ENCODE measurements at regions of chr3 and their contacts with region 1.

Region 1: GRCh38 chr3:52278510-52279069 is at the start of gene WDR82:
- DNase-seq: peak; percentile 92 to 100 (median 96)
- ATAC-seq: peak; percentile 93
- H3K4me3 ChIP-seq: peak within 1 kb of the TSS; percentile 92
- H3K4me3 Mint-ChIP-seq: peak within 1 kb of the TSS; percentile 91 to 99 (median 98)
- H3K27ac ChIP-seq: peak within 1 kb of the TSS; percentile 96
- H3K27ac Mint-ChIP-seq: peak within 1 kb of the TSS; percentile 93 to 99 (median 99)
- H3K4me1 ChIP-seq: peaks cover 41 to 44% of the 10 kb centered on the region in 2 donors
- H3K4me1 Mint-ChIP-seq: peaks cover 37 to 74% (median 71%) of the 10 kb centered on the region in 7 donors
- H3K27me3 ChIP-seq: no peaks in the 10 kb centered on the region
- H3K27me3 Mint-ChIP-seq: no peaks in the 10 kb centered on the region
- total RNA-seq, gene WDR82: 112 to 161 (median 135) TPM

Region 2: GRCh38 chr3:52220380-52221026 is 58.1 kb before region 1 on chr3:
- CTCF ChIA-PET with region 1: interaction called, 9 read pairs
- POLR2A ChIA-PET with region 1: interaction called, 1,418 read pairs
- intact Hi-C with region 1: loop called in 1 of 2 experiments (anchors 1 kb)
- DNase-seq: peak; percentile 75 to 90 (median 83)
- ATAC-seq: peak; percentile 88
- H3K4me3 ChIP-seq: peak overlapping the region; percentile 28
- H3K4me3 Mint-ChIP-seq: peak overlapping the region; percentile 39 to 77 (median 64)
- H3K27ac ChIP-seq: no peak overlapping the region
- H3K27ac Mint-ChIP-seq: peak overlapping the region; percentile 65 to 90 (median 77)
- H3K4me1 ChIP-seq: peaks cover 76 to 88% of the 10 kb centered on the region in 2 donors
- H3K4me1 Mint-ChIP-seq: peaks cover 65 to 95% (median 80%) of the 10 kb centered on the region in 7 donors
- H3K27me3 ChIP-seq: no peaks in the 10 kb centered on the region
- H3K27me3 Mint-ChIP-seq: no peaks in the 10 kb centered on the region

Region 3: GRCh38 chr3:52245322-52246263 is 33.0 kb before region 1 on chr3 and contains the start of gene PPM1M:
- CTCF ChIA-PET with region 1: interaction called, 126 read pairs
- POLR2A ChIA-PET with region 1: interaction called, 1,418 read pairs
- intact Hi-C with region 1: no loop called
- DNase-seq: peak; percentile 57 to 77 (median 73)
- ATAC-seq: peak; percentile 72
- H3K4me3 ChIP-seq: peak within 1 kb of the TSS; percentile 79
- H3K4me3 Mint-ChIP-seq: peak within 1 kb of the TSS; percentile 83 to 91 (median 87)
- H3K27ac ChIP-seq: peak within 1 kb of the TSS; percentile 91
- H3K27ac Mint-ChIP-seq: peak within 1 kb of the TSS; percentile 83 to 99 (median 95)
- H3K4me1 ChIP-seq: peaks cover 48 to 81% of the 10 kb centered on the region in 2 donors
- H3K4me1 Mint-ChIP-seq: peaks cover 36 to 91% (median 84%) of the 10 kb centered on the region in 7 donors
- H3K27me3 ChIP-seq: no peaks in the 10 kb centered on the region
- H3K27me3 Mint-ChIP-seq: no peaks in the 10 kb centered on the region
- total RNA-seq, gene PPM1M: 55.8 to 81.0 (median 74.5) TPM

Region 4: DNA sequence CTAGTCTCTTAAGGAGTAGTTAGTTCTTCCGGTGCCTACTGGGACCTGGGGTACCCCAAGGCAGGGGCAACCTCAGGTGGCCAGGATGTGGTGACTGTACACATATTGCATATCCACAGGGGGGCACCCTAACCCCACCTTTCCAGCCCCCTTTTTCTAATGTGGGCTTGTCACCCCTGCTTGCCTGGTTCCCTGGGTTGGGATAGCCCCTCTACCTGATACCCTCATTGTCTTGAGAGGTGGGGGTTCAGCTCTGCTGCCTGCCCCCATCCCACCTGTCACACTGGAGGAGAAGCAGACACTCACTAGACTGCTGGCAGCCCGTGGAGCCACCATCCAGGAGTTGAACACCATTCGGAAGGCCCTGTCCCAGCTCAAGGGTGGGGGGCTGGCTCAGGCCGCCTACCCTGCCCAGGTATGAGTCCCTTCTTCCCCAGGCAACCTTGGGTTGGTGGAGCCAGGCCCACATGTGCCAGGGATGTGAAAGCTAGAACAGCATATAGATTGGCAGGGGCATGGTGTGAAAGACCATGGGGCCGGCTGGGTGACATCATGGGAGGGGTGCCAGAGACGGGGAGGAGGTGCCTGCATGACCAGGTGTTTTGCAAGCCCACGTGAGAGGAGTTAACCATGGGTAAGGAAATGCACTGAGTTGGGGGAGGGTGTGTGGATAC is 13.1 kb after region 1 on chr3:
- CTCF ChIA-PET with region 1: interaction called, 23 read pairs
- POLR2A ChIA-PET with region 1: interaction called, 112 read pairs
- intact Hi-C with region 1: loop called (anchors 1 kb)
- DNase-seq: peak in 6 of 9 donors; percentile 42 to 59 (median 49)
- ATAC-seq: peak; percentile 21
- H3K4me3 ChIP-seq: no peak overlapping the region
- H3K4me3 Mint-ChIP-seq: peak overlapping the region in 8 of 10 donors; percentile 1 to 84 (median 30)
- H3K27ac ChIP-seq: no peak overlapping the region
- H3K27ac Mint-ChIP-seq: peak overlapping the region in 4 of 9 donors; percentile 11 to 86 (median 72)
- H3K4me1 ChIP-seq: peaks cover 10 to 22% of the 10 kb centered on the region in 2 donors
- H3K4me1 Mint-ChIP-seq: peaks cover 19 to 36% (median 30%) of the 10 kb centered on the region in 7 donors
- H3K27me3 ChIP-seq: no peaks in the 10 kb centered on the region
- H3K27me3 Mint-ChIP-seq: peaks cover 0 to 3% (median 0%) of the 10 kb centered on the region in 5 donors

Region 5: DNA sequence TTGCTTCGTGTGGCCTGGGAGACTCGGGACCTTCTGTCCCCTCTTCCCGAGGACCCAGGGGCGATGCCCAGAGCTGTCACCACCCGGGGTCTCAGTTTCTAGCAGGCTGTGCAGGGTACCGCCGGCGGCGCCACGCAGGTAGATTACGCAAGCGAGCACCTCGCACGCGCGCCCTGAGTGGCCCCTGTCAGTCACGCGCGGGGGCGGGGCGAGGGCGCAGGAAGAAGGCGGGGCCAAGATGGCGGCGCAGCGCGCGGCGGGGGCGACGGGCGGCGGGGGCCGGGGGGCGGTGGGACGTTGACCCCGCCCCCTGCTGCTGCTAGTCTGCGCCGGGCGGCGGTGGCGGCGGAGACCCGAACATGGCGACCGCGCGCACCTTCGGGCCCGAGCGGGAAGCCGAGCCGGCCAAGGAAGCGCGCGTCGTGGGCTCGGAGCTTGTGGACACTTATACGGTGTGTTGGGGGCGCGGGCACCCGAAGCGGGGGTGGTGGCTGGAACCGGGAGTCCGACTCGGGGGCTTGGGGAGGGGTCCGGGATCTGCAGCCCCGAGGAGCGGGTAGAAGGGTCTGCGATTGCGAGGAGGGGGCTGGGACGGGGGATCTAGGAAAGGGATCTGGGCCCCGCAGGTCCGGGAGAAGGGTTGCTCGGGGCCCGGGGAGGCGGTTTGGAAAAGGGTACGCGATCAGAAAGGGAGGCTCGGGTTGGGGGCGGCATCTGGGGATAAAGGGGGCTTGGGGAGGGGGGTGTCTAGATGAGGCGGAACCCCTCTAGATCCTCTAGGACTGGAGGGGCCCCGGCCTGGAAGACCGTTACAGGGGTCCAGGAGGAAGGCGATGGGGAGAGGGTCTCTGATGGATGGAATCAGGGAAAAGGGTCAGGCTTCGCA is 176.9 kb after region 1 on chr3 and contains the start of gene NISCH:
- CTCF ChIA-PET with region 1: no interaction called
- POLR2A ChIA-PET with region 1: no interaction called
- intact Hi-C with region 1: loop called in 1 of 2 experiments (anchors 1 kb)
- DNase-seq: peak; percentile 92 to 99 (median 97)
- ATAC-seq: peak; percentile 98
- H3K4me3 ChIP-seq: peak within 1 kb of the TSS; percentile 98
- H3K4me3 Mint-ChIP-seq: peak within 1 kb of the TSS; percentile 87 to 96 (median 93)
- H3K27ac ChIP-seq: peak within 1 kb of the TSS; percentile 88
- H3K27ac Mint-ChIP-seq: peak within 1 kb of the TSS; percentile 96 to 100 (median 99)
- H3K4me1 ChIP-seq: peaks cover 15 to 23% of the 10 kb centered on the region in 2 donors
- H3K4me1 Mint-ChIP-seq: peaks cover 25 to 47% (median 41%) of the 10 kb centered on the region in 7 donors
- H3K27me3 ChIP-seq: no peaks in the 10 kb centered on the region
- H3K27me3 Mint-ChIP-seq: no peaks in the 10 kb centered on the region
- total RNA-seq, gene NISCH: 86.8 to 210 (median 162) TPM

Region 6: DNA sequence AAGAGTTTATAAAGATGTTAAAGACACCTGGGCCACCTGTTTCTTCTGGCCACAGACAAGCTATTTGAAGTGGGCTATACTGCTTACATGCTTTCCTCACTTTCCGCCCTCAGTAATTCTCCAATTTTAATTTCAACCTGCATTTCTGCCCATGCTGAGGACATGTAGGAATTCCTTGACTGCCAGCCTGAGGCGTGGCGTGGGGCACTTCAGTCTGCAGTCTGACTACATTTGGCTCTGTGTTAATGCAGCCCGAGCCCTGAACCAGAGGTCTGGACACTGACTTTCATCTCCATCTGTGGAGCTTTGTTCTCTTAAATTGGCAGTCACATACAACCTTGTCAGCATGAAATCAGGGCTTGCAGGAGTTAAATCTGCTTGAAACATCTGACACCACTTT is 266.3 kb after region 1 on chr3:
- CTCF ChIA-PET with region 1: no interaction called
- POLR2A ChIA-PET with region 1: no interaction called
- intact Hi-C with region 1: no loop called
- DNase-seq: no peak
- ATAC-seq: no peak
- H3K4me3 ChIP-seq: no peak overlapping the region
- H3K4me3 Mint-ChIP-seq: no peak overlapping the region
- H3K27ac ChIP-seq: no peak overlapping the region
- H3K27ac Mint-ChIP-seq: peak overlapping the region in 4 of 9 donors; percentile 4 to 70 (median 47)
- H3K4me1 ChIP-seq: peaks cover 0 to 1% of the 10 kb centered on the region in 2 donors
- H3K4me1 Mint-ChIP-seq: peaks cover 5 to 27% (median 14%) of the 10 kb centered on the region in 7 donors
- H3K27me3 ChIP-seq: no peaks in the 10 kb centered on the region
- H3K27me3 Mint-ChIP-seq: no peaks in the 10 kb centered on the region